ENCODE measurements at regions of chr10 and their contacts with region 1.

Region 1: GRCh38 chr10:35843524-35844181 is 201.6 kb upstream of the FZD8 start:
- DNase-seq: no peak
- ATAC-seq: no peak
- H3K4me3 ChIP-seq: no peak overlapping the region
- H3K4me3 Mint-ChIP-seq: no peak overlapping the region
- H3K27ac ChIP-seq: no peak overlapping the region
- H3K27ac Mint-ChIP-seq: no peak overlapping the region
- H3K4me1 ChIP-seq: no peaks in the 10 kb centered on the region
- H3K4me1 Mint-ChIP-seq: no peaks in the 10 kb centered on the region
- H3K27me3 ChIP-seq: no peaks in the 10 kb centered on the region
- H3K27me3 Mint-ChIP-seq: no peaks in the 10 kb centered on the region
- CTCF ChIP-seq: no peak

Region 2: DNA sequence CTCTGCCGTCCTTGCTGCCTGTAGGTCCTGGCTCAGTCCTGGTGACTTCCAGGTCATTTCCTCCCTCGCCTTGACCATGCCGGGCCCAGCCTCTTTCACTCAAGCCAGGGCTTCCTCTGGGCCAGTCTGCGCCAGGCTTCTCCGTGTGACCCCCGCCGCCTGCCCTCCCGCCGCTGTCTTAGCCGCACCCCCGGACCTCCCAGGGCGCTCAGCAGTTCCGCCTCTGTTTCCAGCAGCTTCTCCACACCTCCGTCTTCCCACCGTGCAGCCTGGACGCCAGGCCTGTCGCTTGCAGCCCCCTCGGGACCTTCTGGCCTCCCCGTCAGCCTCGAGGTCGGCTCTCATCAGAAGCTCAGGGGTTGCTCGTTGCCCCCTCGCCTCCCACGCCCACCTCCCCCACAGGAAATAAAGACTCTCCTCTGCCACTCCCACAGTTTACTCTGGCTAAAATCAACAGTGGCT is 78.6 kb before region 1 on chr10:
- CTCF ChIA-PET with region 1: no interaction called
- POLR2A ChIA-PET with region 1: no interaction called
- intact Hi-C with region 1: loop called in 1 of 2 experiments (anchors 10 kb)
- DNase-seq: no peak
- ATAC-seq: no peak
- H3K4me3 ChIP-seq: no peak overlapping the region
- H3K4me3 Mint-ChIP-seq: no peak overlapping the region
- H3K27ac ChIP-seq: no peak overlapping the region
- H3K27ac Mint-ChIP-seq: no peak overlapping the region
- H3K4me1 ChIP-seq: no peaks in the 10 kb centered on the region
- H3K4me1 Mint-ChIP-seq: no peaks in the 10 kb centered on the region
- H3K27me3 ChIP-seq: no peaks in the 10 kb centered on the region
- H3K27me3 Mint-ChIP-seq: peaks cover 2% of the 10 kb centered on the region
- CTCF ChIP-seq: no peak